GM10248 (cell line): ENCODE measurements at regions of chr15 and their contacts with region 1.

Region 1: DNA sequence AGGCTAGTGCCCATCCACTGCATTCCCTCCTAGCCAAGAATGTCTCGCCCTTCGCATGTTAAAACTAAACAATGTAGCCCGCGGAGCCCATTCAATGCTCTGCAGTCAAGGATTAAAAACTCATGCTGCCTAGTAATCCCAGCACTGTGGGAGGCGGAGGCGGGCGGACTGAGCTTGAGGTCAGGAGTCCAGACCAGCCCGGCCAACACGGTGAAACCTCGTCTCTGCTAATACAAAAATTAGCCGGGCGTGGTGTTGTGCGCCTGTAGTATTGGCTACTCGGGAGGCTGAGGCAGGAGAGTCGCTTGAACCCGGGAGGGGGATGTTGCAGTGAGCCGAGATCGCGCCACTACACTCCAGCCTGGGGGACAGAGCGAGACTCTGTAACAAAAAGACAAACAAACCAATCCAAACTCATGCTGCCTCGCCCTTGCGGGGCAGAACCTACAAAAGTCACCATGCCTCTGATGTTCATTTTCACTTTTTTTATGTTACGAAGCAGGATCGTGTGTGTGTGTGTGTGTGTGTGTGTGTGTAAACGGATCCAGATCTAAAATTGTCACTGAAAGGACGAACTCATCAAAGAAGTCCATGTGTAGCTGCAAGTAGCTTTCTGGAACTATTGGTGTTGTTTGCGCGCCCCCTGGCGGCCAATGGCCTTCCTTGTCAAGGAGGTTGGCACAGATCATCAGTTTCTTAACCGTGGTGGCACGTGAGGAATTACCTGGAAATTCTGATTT is 54.8 kb upstream of the SPESP1 start:
- DNase-seq: peak; percentile 84
- CTCF ChIP-seq: peak; percentile 81

Region 2: GRCh38 chr15:68550481-68551295 is 324.9 kb before region 1 on chr15:
- CTCF ChIA-PET with region 1: interaction called, 60 read pairs
- POLR2A ChIA-PET with region 1: no interaction called
- DNase-seq: peak; percentile 74
- CTCF ChIP-seq: peak; percentile 81

Region 3: DNA sequence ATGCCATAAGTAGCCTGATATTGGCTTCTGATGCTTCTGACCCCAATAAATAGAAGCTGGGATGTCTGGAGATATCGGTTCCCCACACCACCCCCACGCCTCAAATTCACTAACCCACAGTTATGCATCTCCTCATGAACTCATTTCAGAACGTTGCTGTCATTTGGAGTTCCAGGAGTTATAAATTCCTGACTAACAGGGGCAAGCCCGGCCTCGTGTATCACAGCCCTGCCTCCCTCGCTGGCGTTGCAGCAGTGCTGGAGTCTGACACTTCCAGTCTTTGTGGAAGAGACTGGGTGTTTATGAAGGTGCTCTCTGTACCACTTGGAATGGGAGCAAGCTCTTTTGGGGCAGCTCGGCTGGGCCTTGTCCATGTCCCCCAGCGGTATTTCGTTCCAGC is 155.9 kb before region 1 on chr15:
- CTCF ChIA-PET with region 1: interaction called, 13 read pairs
- POLR2A ChIA-PET with region 1: no interaction called
- DNase-seq: no peak
- CTCF ChIP-seq: no peak

Region 4: GRCh38 chr15:68773036-68773435 is 102.5 kb before region 1 on chr15:
- CTCF ChIA-PET with region 1: interaction called, 11 read pairs
- POLR2A ChIA-PET with region 1: no interaction called
- DNase-seq: no peak
- CTCF ChIP-seq: no peak

Region 5: GRCh38 chr15:68862415-68862814 is 13.1 kb before region 1 on chr15:
- CTCF ChIA-PET with region 1: interaction called, 18 read pairs
- POLR2A ChIA-PET with region 1: no interaction called
- DNase-seq: no peak
- CTCF ChIP-seq: no peak

Region 6: GRCh38 chr15:69014454-69014853 is 138.9 kb after region 1 on chr15 and contains the start of gene NOX5:
- CTCF ChIA-PET with region 1: no interaction called
- POLR2A ChIA-PET with region 1: no interaction called
- DNase-seq: no peak
- CTCF ChIP-seq: no peak

Region 7: GRCh38 chr15:69253156-69253555 is 377.6 kb after region 1 on chr15:
- CTCF ChIA-PET with region 1: no interaction called
- POLR2A ChIA-PET with region 1: no interaction called
- DNase-seq: no peak
- CTCF ChIP-seq: no peak